HEK293 (cell line): ENCODE measurements at regions of chr12 and their contacts with region 1.

Region 1: DNA sequence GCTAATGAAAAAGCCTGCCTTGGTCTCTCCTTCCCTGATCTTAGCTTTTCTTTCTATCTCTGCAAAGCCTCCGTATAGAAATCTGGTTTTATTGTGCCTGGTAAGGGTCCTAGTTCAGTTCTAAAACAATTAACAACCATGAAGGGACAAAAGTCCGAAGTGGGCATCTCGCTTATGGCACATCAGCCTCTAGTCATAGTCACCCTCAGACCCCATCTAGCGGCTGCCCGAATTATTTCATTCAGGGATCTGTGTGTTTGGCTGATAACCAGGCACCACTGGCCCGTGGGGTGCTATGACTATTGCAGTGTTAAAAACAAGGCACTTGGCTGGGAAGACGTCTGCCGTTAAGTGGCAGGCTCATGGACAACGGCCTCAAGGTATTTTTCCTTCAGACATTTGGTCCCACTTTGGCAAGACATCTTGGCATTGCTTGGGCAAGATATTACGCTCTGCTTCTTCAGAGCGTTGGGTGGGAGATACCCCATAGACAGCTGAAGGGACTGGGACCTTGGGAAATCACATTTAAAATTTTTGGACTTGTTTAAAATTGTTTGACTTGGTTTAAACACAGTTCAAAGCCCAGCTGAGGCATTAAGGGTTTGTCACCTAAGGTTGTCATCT is 87.1 kb downstream of the SINHCAF start:
- H3K4me3 ChIP-seq: no peak overlapping the region
- H3K27ac ChIP-seq: no peak overlapping the region
- H3K4me1 ChIP-seq: peaks cover 6% of the 10 kb centered on the region; the same call in 1 of the 2 replicates
- CTCF ChIP-seq: peak; percentile 23; the same call in 1 of the 2 replicates

Region 2: GRCh38 chr12:31011746-31012566 is 226.9 kb before region 1 on chr12:
- CTCF ChIA-PET with region 1: no interaction called
- POLR2A ChIA-PET with region 1: no interaction called
- H3K4me3 ChIP-seq: no peak overlapping the region
- H3K27ac ChIP-seq: no peak overlapping the region
- H3K4me1 ChIP-seq: no peaks in the 10 kb centered on the region
- CTCF ChIP-seq: peak; percentile 61

Region 3: GRCh38 chr12:31250179-31250578 is 11.3 kb after region 1 on chr12:
- CTCF ChIA-PET with region 1: interaction called, 14 read pairs
- POLR2A ChIA-PET with region 1: no interaction called
- H3K4me3 ChIP-seq: no peak overlapping the region
- H3K27ac ChIP-seq: no peak overlapping the region
- H3K4me1 ChIP-seq: no peaks in the 10 kb centered on the region
- CTCF ChIP-seq: no peak

Region 4: GRCh38 chr12:31431721-31432240 is 192.9 kb after region 1 on chr12:
- CTCF ChIA-PET with region 1: no interaction called
- POLR2A ChIA-PET with region 1: no interaction called
- H3K4me3 ChIP-seq: no peak overlapping the region
- H3K27ac ChIP-seq: no peak overlapping the region
- H3K4me1 ChIP-seq: no peaks in the 10 kb centered on the region
- CTCF ChIP-seq: no peak